PC-3 (cell line): ENCODE measurements at regions of chr13 and their contacts with region 1.

Region 1: DNA sequence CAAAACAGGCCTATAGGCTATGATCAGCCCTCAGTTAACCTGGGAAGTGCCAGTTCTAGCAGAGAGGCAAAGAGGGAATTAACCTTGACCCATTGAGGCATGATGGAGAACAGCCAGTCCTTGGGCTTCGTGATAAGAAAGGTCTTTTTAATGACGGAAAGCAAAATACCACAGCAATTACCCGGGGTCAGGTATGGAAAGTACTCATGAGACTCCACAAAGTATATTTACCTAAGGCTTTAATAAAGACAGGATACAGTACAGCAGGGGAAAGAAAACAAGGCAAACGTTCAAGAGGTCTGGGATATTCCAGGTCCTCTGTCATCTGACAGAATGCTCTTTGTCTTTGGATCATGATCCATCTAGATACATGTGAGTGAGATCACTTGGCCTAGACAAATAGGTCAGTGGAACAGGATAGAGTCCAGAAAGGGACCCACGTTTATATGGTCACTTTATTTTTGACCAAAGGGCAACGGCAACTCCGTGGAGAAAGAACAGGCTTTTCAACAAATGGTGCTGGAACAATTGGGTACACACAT is 52.2 kb downstream of the WDFY2 start:
- DNase-seq: peak; percentile 72
- ATAC-seq: peak; percentile 67
- H3K4me3 ChIP-seq: no peak overlapping the region; the same call in 1 of the 2 replicates
- H3K27ac ChIP-seq: peak overlapping the region; percentile 92
- H3K4me1 ChIP-seq: peaks cover 67% of the 10 kb centered on the region
- H3K27me3 ChIP-seq: no peaks in the 10 kb centered on the region
- CTCF ChIP-seq: no peak

Region 2: DNA sequence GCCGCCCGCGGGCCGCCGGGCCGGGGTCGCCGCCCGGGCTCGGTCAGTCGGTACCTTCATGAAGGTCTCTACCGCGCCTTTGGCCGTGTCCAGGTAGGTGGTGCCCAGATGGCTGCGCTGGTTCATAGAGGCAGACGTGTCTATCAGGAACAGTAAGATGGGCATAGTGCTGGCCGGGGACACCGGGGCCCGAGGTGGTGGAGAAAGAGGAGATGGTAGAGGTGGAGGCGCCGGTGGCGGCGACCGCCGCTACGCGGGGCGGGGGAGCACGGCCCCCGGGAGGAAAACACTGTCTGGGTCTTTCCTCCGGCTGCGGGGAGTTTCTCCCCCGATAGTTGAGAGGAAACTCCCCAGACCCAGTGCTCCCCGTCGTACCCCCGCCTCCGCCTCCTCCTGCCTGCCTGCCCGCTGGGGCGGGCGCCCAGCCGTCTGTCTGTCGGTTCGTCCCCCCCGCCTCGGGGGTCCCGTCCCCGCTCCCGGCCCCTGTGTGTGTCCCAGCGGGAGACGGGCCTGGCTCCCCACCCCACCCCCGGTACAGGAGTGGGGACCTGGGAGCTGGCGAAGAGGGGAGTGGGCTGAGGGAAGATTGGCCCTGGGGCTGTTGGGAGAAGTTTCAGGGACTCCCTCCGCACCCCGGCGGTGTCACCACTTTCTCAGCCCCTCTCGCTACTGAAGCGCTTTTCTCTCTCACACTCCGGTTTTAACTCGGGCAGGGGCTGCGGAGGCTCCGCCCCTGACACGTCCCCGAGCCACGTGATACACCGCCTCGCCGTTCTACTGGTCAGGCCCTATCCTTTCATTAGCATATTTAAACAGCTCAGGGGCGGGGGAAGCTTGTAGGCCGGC is 183.8 kb before region 1 on chr13 and contains the start of gene INTS6:
- CTCF ChIA-PET with region 1: no interaction called
- POLR2A ChIA-PET with region 1: interaction called, 7 read pairs
- intact Hi-C with region 1: loop called (anchors 5 kb)
- DNase-seq: peak; percentile 96
- ATAC-seq: peak; percentile 88
- H3K4me3 ChIP-seq: peak within 1 kb of the TSS; percentile 94
- H3K27ac ChIP-seq: peak within 1 kb of the TSS; percentile 81
- H3K4me1 ChIP-seq: peaks cover 23% of the 10 kb centered on the region
- H3K27me3 ChIP-seq: no peaks in the 10 kb centered on the region
- CTCF ChIP-seq: no peak
- total RNA-seq, gene INTS6: 19.9 and 26.6 TPM in 2 replicates

Region 3: DNA sequence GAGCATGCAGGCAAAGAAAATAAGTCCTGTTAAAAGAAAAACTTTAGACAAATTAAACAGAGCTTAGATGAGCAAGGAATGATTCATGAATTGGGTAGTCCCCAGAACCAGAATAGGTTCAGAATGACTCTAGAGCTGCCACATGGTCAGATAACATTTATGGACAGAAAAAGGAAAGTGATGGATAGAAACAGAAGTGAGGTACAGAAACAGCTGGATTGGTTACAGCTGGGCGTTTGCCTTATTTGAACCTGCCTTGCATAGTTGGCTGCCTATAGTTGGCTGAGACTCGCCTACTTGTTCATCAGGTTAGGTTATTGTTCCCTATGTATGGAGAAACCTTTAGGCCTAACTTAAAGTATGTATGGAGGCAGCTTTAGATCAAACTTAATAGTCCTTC is 16.8 kb before region 1 on chr13:
- CTCF ChIA-PET with region 1: interaction called, 5 read pairs
- POLR2A ChIA-PET with region 1: no interaction called
- intact Hi-C with region 1: loop called (anchors 2 kb)
- DNase-seq: peak; percentile 64
- ATAC-seq: peak; percentile 89
- H3K4me3 ChIP-seq: no peak overlapping the region
- H3K27ac ChIP-seq: peak overlapping the region; percentile 64
- H3K4me1 ChIP-seq: peaks cover 19% of the 10 kb centered on the region
- H3K27me3 ChIP-seq: no peaks in the 10 kb centered on the region
- CTCF ChIP-seq: no peak

Region 4: DNA sequence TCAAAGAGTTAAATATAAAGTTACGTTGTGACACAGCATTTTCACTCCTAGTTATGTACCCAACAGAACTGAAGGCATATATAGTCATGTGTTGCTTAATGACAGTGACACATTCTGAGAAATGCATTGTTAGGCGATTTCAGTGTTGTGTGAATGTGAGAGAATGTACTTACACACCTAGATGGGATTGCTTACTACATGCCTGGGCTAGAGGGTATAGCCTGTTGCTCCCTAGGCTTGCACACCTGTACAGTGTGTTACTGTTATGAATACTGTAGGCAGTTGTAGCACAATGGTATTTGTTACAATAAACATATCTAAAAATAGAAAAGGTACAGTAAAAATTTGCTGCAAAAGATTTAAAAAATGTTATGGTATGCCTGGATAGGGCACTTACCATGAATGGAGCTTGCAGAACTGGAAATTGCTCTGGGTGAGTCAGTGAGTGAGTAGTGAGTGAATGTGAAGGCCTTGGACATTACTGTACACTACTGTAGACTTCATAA is 78.3 kb after region 1 on chr13:
- CTCF ChIA-PET with region 1: no interaction called
- POLR2A ChIA-PET with region 1: no interaction called
- intact Hi-C with region 1: loop called (anchors 5 kb)
- DNase-seq: peak; percentile 82
- ATAC-seq: peak; percentile 94
- H3K4me3 ChIP-seq: no peak overlapping the region
- H3K27ac ChIP-seq: peak overlapping the region; percentile 81
- H3K4me1 ChIP-seq: peaks cover 23% of the 10 kb centered on the region
- H3K27me3 ChIP-seq: no peaks in the 10 kb centered on the region
- CTCF ChIP-seq: no peak